ENCODE measurements at regions of chr2 and their contacts with region 1.

Region 1: DNA sequence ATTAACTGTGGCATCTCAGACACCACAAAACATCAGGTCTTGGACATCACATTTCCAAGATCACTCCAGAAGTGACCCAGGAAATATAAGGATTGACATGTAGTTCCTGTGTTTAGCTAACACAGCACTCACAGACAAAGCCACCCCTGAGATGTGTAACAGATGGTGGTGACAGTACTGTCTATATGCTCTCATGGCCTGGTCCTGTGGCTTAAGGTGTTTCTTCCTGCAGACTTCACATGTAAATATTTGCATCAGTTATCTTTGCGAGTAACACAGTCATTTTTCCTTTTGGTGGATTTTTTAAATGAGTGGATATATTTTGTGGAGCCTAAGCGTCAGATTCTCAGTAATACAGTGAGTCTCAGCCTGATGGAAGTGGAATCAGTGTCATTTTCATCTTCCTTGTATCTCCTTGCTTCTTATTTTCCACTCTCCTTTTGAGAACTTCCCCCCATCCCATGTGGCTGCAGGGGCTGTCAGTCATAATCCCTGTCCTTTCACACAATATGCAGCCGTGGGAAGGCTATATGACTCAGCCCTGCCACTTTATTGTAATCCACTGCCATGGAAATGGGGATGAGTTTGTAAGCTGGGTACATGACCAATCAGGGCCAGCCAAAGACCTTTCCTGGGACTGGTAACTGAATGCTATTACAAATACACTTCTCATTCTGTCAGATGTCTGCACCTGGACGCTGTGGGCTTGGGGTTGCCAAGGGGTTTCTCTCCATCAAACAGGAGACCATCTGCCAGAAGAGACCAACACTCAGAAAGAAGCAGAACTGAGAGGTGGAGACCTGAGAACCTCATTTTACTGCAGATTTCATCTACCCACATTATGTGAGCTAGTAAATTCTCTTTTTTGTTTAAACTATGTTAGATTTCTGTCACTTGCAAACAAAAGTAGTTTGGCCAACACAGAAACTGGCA is 74.3 kb downstream of the ICOS start:
- DNase-seq: peak; percentile 49
- H3K4me3 Mint-ChIP-seq: peak overlapping the region; percentile 56
- H3K27ac Mint-ChIP-seq: peak overlapping the region; percentile 78
- H3K4me1 Mint-ChIP-seq: peaks cover 87% of the 10 kb centered on the region
- H3K27me3 Mint-ChIP-seq: no peaks in the 10 kb centered on the region

Region 2: GRCh38 chr2:203997980-203998809 is 12.7 kb before region 1 on chr2:
- CTCF ChIA-PET with region 1: interaction called, 4 read pairs
- POLR2A ChIA-PET with region 1: interaction called, 10 read pairs
- intact Hi-C with region 1: loop called (anchors 1 kb)
- DNase-seq: no peak
- H3K4me3 Mint-ChIP-seq: peak overlapping the region; percentile 21
- H3K27ac Mint-ChIP-seq: peak overlapping the region; percentile 82
- H3K4me1 Mint-ChIP-seq: peaks cover 65% of the 10 kb centered on the region
- H3K27me3 Mint-ChIP-seq: no peaks in the 10 kb centered on the region

Region 3: GRCh38 chr2:204715361-204715760 is 704.5 kb after region 1 on chr2:
- CTCF ChIA-PET with region 1: no interaction called
- POLR2A ChIA-PET with region 1: no interaction called
- intact Hi-C with region 1: no loop called
- DNase-seq: no peak
- H3K4me3 Mint-ChIP-seq: no peak overlapping the region
- H3K27ac Mint-ChIP-seq: no peak overlapping the region
- H3K4me1 Mint-ChIP-seq: no peaks in the 10 kb centered on the region
- H3K27me3 Mint-ChIP-seq: peaks cover 2% of the 10 kb centered on the region